ENCODE measurements at regions of chr9 and their contacts with region 1.

Region 1: GRCh38 chr9:113578882-113579282 is 115.4 kb downstream of the RGS3 start:
- DNase-seq: peak; percentile 95
- H3K4me3 Mint-ChIP-seq: peak overlapping the region; percentile 81
- H3K27ac Mint-ChIP-seq: peak overlapping the region; percentile 92
- H3K4me1 Mint-ChIP-seq: peaks cover 70% of the 10 kb centered on the region
- H3K27me3 Mint-ChIP-seq: no peaks in the 10 kb centered on the region

Region 2: DNA sequence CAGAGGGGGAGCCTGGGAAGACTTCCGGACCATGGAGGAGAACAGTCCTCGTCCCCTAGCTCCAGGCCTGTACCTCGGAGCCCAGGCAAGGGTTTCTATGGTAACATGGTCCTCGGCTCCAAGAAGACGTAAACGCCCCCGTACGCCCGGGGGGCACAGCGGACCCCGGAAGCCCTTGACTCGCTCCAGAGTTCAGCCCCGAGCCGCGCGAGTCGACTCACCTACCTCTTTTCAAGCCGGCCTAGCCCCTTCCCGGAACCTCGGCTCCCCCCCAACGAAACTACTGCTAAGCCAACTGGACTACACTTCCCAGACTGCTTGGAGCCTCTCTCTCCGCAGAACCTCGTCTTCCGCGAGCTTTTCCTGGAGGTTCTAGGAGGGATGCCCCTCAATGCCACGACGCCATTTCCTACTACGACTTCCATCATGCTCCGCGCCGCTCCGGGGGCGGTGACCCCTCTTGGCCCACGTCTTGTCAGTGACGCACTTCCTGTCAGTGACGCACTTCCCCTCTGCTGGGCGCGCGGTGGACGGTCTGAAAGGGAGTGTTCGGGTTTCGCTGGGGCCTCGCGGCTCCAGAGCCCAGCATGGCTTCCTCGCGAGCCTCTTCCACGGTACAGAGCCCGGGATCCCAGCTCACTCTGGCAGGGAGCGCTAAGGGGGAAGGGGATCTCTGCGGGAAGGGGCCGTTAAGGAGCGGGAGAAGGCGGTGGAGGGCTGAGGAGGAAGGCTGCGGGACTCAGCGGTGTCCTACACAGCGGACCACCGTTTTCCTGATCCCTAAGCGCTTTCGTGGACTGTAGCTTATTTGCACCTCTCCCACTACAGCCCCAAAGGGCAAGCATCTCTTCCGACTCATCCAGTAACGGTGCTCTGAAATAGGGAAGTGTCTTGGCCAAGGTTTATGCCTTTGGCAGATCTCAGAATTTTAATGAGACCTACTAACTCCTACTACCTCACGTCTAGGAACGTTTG is 303.4 kb before region 1 on chr9 and contains the starts of genes CDC26 and PRPF4:
- CTCF ChIA-PET with region 1: no interaction called
- intact Hi-C with region 1: loop called (anchors 1 kb)
- DNase-seq: peak; percentile 96
- H3K4me3 Mint-ChIP-seq: no peak within 1 kb of the TSS
- H3K27ac Mint-ChIP-seq: no peak within 1 kb of the TSS
- H3K4me1 Mint-ChIP-seq: peaks cover 31% of the 10 kb centered on the region
- H3K27me3 Mint-ChIP-seq: no peaks in the 10 kb centered on the region
- total RNA-seq, gene CDC26: 36.3 to 38.1 TPM
- total RNA-seq, gene PRPF4: 39.9 to 44.3 TPM

Region 3: DNA sequence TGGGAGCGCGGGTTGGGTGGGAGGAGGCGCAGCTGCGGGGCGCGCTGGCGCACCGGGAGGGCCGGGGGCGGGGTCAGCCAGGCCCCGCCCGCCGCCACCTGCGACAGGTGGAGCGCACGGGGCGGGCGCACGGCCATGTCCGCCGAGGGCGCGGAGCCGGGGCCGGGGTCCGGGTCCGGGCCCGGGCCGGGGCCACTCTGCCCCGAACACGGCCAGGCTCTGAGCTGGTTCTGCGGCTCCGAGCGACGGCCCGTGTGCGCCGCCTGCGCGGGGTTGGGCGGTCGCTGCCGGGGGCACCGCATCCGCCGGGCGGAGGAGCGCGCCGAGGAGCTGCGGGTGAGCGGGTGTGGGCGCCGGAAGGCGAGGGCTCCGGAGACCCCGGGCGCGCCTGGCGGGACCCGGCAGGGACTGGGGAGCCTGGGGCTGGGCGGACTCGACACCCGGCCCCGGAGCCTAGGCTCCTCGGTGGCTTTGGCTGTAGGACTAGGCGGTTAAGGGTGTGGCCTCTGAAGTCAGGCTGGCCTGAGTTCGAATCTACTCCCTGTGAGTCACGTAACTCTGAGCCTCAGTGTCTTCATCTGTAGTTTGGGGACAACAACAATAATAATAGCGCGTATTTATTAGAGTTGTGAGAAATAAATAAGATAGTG is 229.3 kb before region 1 on chr9 and contains the start of gene BSPRY:
- CTCF ChIA-PET with region 1: interaction called, 3 read pairs
- intact Hi-C with region 1: loop called (anchors 1 kb)
- DNase-seq: peak; percentile 42
- H3K4me3 Mint-ChIP-seq: peak within 1 kb of the TSS; percentile 87
- H3K27ac Mint-ChIP-seq: peak within 1 kb of the TSS; percentile 84
- H3K4me1 Mint-ChIP-seq: peaks cover 61% of the 10 kb centered on the region
- H3K27me3 Mint-ChIP-seq: peaks cover 26% of the 10 kb centered on the region
- total RNA-seq, gene BSPRY: 7.7 to 8.3 TPM

Region 4: DNA sequence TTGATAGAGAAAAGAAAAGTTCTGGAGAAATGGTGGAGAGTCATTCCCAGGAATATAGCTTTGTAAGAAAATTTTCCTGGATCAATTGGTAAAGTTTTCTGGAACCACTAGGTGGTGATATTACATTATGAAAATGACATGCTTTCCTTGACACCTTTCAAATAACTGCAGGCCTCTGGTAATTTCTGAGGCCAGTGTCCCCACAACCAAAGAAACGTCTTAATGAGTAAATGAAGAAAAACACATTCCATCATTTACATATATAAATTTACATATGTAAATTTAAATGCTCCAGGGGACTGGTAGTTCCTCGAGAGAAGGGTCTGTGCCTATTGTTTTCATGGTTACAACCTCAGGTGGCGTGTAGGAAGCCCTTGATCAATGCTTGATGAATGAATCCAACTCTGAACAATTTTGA is 132.6 kb before region 1 on chr9:
- CTCF ChIA-PET with region 1: interaction called, 69 read pairs
- intact Hi-C with region 1: loop called (anchors 1 kb)
- DNase-seq: peak; percentile 22
- H3K4me3 Mint-ChIP-seq: no peak overlapping the region
- H3K27ac Mint-ChIP-seq: no peak overlapping the region
- H3K4me1 Mint-ChIP-seq: no peaks in the 10 kb centered on the region
- H3K27me3 Mint-ChIP-seq: no peaks in the 10 kb centered on the region

Region 5: GRCh38 chr9:113523421-113524236 is 55.3 kb before region 1 on chr9:
- CTCF ChIA-PET with region 1: interaction called, 5 read pairs
- intact Hi-C with region 1: loop called (anchors 1 kb)
- DNase-seq: peak; percentile 55
- H3K4me3 Mint-ChIP-seq: peak overlapping the region; percentile 10
- H3K27ac Mint-ChIP-seq: peak overlapping the region; percentile 13
- H3K4me1 Mint-ChIP-seq: peaks cover 55% of the 10 kb centered on the region
- H3K27me3 Mint-ChIP-seq: no peaks in the 10 kb centered on the region

Region 6: GRCh38 chr9:113591001-113591898 is 12.4 kb after region 1 on chr9:
- CTCF ChIA-PET with region 1: interaction called, 41 read pairs
- intact Hi-C with region 1: no loop called
- DNase-seq: peak; percentile 85
- H3K4me3 Mint-ChIP-seq: no peak overlapping the region
- H3K27ac Mint-ChIP-seq: no peak overlapping the region
- H3K4me1 Mint-ChIP-seq: peaks cover 37% of the 10 kb centered on the region
- H3K27me3 Mint-ChIP-seq: no peaks in the 10 kb centered on the region

Region 7: DNA sequence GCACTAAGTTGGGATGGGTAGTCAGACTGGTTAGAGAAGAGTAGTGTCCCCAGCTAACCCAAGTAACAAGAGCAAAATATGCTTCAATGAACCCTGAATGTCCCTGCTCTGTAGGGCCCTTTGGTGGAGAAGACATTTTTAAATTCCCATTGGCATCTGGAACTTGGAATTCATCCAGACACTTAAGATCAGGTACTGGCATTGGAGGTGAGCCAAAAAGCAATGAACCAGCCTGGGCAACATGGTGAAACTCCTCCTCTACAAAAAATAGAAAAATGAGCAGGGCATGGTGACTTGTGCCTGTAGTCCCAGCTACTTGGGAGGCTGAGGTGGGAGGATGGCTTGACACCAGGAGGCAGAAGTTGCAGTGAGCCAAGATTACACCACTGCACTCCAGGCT is 238.3 kb after region 1 on chr9:
- CTCF ChIA-PET with region 1: no interaction called
- intact Hi-C with region 1: no loop called
- DNase-seq: no peak
- H3K4me3 Mint-ChIP-seq: no peak overlapping the region
- H3K27ac Mint-ChIP-seq: no peak overlapping the region
- H3K4me1 Mint-ChIP-seq: no peaks in the 10 kb centered on the region
- H3K27me3 Mint-ChIP-seq: peaks cover 24% of the 10 kb centered on the region

Region 8: DNA sequence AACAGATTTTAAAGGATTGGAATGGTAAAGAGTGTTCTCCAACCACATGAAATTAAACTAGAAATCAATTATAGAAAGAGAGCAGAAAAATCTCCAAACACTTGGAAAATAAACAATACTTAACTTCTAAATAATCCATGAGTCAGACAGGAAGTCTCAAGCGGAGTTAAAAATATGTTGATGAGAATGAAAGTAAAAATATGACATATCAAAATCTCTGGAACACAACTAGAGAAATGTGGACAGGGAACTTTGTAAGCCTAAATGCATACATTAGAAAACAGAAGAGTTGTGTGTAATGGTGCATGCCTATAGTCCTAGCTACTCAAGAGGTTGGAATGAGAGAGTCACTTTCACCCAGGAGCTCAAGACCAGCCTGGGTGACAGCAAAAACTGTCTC is 249.3 kb after region 1 on chr9:
- CTCF ChIA-PET with region 1: no interaction called
- intact Hi-C with region 1: no loop called
- DNase-seq: no peak
- H3K4me3 Mint-ChIP-seq: no peak overlapping the region
- H3K27ac Mint-ChIP-seq: no peak overlapping the region
- H3K4me1 Mint-ChIP-seq: no peaks in the 10 kb centered on the region
- H3K27me3 Mint-ChIP-seq: peaks cover 9% of the 10 kb centered on the region

Measured in activated naive CD4-positive, alpha-beta T cell treated with anti-CD3 and anti-CD28 coated beads for 36 hours (primary cell).